ENCODE measurements at regions of chr1 and their contacts with region 1.

Region 1: GRCh38 chr1:197902454-197903195 is at the start of gene C1orf53:
- H3K4me3 ChIP-seq: peak within 1 kb of the TSS; percentile 88
- H3K27ac ChIP-seq: peak within 1 kb of the TSS; percentile 95
- H3K4me1 ChIP-seq: 0 out of 2 replicates have a peak, but pooled peaks cover 2% of the 10 kb centered on the region
- CTCF ChIP-seq: peak; percentile 67; the same call in 1 of the 2 replicates

Region 2: GRCh38 chr1:197915862-197916499 is 13.4 kb after region 1 on chr1:
- CTCF ChIA-PET with region 1: interaction called, 7 read pairs
- POLR2A ChIA-PET with region 1: interaction called, 16 read pairs
- H3K4me3 ChIP-seq: peak overlapping the region; percentile 45
- H3K27ac ChIP-seq: peak overlapping the region; percentile 43; the same call in 1 of the 2 replicates
- H3K4me1 ChIP-seq: no peaks in the 10 kb centered on the region
- CTCF ChIP-seq: peak; percentile 87

Region 3: GRCh38 chr1:197967063-197967462 is 64.4 kb after region 1 on chr1:
- CTCF ChIA-PET with region 1: no interaction called
- POLR2A ChIA-PET with region 1: no interaction called
- H3K4me3 ChIP-seq: no peak overlapping the region
- H3K27ac ChIP-seq: no peak overlapping the region
- H3K4me1 ChIP-seq: no peaks in the 10 kb centered on the region
- CTCF ChIP-seq: no peak

Region 4: GRCh38 chr1:198001776-198002408 is 99.3 kb after region 1 on chr1:
- CTCF ChIA-PET with region 1: no interaction called
- POLR2A ChIA-PET with region 1: no interaction called
- H3K4me3 ChIP-seq: no peak overlapping the region
- H3K27ac ChIP-seq: no peak overlapping the region
- H3K4me1 ChIP-seq: no peaks in the 10 kb centered on the region
- CTCF ChIP-seq: no peak